ENCODE measurements at regions of chr4 and their contacts with region 1.

Region 1: DNA sequence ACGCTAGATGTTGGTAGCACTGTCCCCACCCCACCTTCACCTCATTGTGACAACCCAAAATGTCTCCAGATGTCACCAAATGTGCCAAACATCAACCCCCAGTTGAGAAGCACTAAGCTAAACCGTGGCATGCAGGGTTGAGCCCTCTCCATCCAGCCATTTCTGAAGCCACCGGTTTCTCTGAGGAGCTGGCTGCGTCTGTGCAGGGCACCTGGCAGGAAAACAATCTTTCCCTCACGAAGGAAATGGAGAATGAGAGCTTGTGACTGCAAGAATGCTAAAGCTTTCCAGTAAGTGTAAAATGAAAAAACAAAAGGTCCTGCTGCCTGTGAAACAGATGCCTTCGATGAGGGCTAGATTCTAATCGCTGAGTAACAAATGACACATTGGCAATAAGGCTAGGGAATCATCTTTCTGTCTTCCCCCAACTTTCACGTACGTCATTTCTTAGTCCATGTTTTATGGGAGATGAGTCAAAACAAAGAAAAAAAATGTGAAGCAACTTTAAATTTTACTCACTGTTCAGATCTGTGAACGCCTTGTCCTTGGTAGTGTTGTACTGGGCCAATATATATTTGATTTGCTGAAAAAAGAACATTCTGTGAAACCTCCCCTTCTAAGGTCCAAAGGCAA is 59.9 kb downstream of the PROM1 start:
- DNase-seq: no peak
- H3K4me3 ChIP-seq: no peak overlapping the region
- H3K27ac ChIP-seq: no peak overlapping the region
- H3K4me1 ChIP-seq: peaks cover 0 to 30% (median 10%) of the 10 kb centered on the region in 4 donors
- H3K27me3 ChIP-seq: no peaks in the 10 kb centered on the region
- CTCF ChIP-seq: no peak

Region 2: DNA sequence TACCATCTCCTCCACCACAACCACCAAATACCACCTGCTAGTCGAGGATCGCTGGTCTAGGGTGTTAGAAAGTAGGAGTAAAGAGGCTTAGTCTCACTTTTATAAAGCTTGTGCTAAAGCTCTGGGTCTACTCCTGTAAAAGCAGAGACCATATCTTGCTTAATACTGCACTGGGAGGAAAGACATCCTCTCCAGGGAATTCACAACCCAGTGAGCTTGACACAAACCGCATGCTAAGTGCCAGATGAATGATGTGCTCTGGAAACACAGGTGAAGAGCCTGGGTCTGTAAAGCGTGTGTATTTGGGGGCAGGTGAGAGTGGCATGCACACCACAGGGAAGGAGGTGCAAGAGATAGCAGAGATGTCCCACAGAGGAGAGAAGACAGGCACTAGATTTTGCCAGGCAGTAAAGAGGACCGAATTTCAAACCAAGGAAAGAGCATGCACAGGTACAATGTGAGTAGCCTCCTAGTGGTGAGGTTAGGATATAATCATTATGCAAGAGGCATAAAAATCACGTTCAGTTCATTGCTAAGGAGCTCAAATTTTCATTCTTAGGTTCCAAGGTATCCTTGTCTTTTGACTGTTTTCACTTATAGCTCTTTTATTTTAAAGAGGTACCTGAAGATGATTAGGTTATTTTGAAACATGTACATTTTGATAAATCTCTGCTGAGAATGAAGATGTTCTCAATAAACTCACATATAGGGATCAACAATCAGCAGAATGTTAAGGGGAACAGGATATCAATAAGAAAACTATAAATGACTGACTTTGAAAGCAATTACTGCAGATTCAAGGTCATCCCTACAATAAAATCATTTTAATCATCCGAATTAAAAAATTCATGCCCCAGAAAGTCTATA is 181.6 kb after region 1 on chr4:
- intact Hi-C with region 1: loop called (anchors 2 kb)
- DNase-seq: no peak
- H3K4me3 ChIP-seq: no peak overlapping the region
- H3K27ac ChIP-seq: no peak overlapping the region
- H3K4me1 ChIP-seq: peaks cover 0 to 21% (median 3%) of the 10 kb centered on the region in 4 donors
- H3K27me3 ChIP-seq: no peaks in the 10 kb centered on the region
- CTCF ChIP-seq: peak; percentile 33 to 45

Region 3: DNA sequence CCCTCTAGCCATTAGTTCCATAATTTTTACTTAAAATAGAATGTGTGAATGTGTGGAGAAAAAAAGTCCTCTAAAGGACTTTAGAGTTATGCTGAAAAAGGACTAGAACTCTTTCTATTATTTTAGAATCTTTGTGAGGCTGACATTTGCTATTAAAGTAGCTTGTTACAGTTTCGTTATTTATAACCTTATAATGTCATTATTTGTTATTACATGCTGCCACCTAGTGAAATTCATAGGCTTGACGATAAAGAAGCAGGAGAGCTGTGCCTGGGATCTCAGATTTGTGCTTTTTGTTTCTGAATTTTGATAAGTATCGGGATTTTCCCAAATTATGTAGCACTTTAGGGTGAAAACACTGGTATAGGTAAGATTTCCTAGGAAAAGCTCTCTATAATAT is 240.9 kb after region 1 on chr4:
- intact Hi-C with region 1: loop called (anchors 2 kb)
- DNase-seq: no peak
- H3K4me3 ChIP-seq: no peak overlapping the region
- H3K27ac ChIP-seq: no peak overlapping the region
- H3K4me1 ChIP-seq: peaks cover 0 to 8% (median 4%) of the 10 kb centered on the region in 4 donors
- H3K27me3 ChIP-seq: no peaks in the 10 kb centered on the region
- CTCF ChIP-seq: peak; percentile 56 to 63